Caco-2 (cell line): ENCODE measurements at regions of chr13 and their contacts with region 1.

Region 1: DNA sequence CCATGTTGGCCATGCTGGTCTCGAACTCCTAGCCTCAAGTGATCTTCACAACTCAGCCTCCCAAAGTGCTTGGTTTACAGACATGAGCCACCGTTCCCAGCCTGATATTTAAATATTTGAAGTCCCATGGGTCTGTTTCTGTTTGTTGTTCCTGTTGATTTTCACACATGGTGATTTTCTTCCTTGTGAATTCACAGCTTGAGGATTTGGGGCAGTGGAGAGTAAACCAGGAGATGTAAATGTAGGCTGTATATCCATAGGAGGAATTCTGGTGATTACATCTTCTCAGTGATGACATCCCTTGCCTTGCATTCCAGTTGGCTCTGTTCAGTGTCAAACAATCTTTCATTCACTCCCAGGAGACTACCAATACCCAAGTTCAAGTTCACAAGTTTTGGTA is 471.9 kb downstream of the KCTD12 start:
- DNase-seq: no peak
- H3K4me3 ChIP-seq: no peak overlapping the region
- H3K4me3 Mint-ChIP-seq: no peak overlapping the region
- H3K27ac Mint-ChIP-seq: no peak overlapping the region
- H3K4me1 ChIP-seq: no peaks in the 10 kb centered on the region
- H3K4me1 Mint-ChIP-seq: peaks cover 13% of the 10 kb centered on the region
- H3K27me3 ChIP-seq: no peaks in the 10 kb centered on the region
- H3K27me3 Mint-ChIP-seq: no peaks in the 10 kb centered on the region
- CTCF ChIP-seq: no peak

Region 2: GRCh38 chr13:75986818-75987217 is 427.5 kb before region 1 on chr13:
- CTCF ChIA-PET with region 1: no interaction called
- POLR2A ChIA-PET with region 1: no interaction called
- intact Hi-C with region 1: no loop called
- DNase-seq: no peak
- H3K4me3 ChIP-seq: no peak overlapping the region
- H3K4me3 Mint-ChIP-seq: no peak overlapping the region
- H3K27ac Mint-ChIP-seq: no peak overlapping the region
- H3K4me1 ChIP-seq: no peaks in the 10 kb centered on the region
- H3K4me1 Mint-ChIP-seq: peaks cover 24% of the 10 kb centered on the region
- H3K27me3 ChIP-seq: no peaks in the 10 kb centered on the region
- H3K27me3 Mint-ChIP-seq: no peaks in the 10 kb centered on the region
- CTCF ChIP-seq: no peak

Region 3: GRCh38 chr13:76048675-76049375 is 365.5 kb before region 1 on chr13:
- CTCF ChIA-PET with region 1: no interaction called
- POLR2A ChIA-PET with region 1: no interaction called
- intact Hi-C with region 1: no loop called
- DNase-seq: peak in 1 of 2 experiments; percentile 29
- H3K4me3 ChIP-seq: no peak overlapping the region
- H3K4me3 Mint-ChIP-seq: peak overlapping the region; percentile 28
- H3K27ac Mint-ChIP-seq: peak overlapping the region; percentile 58
- H3K4me1 ChIP-seq: peaks cover 31% of the 10 kb centered on the region
- H3K4me1 Mint-ChIP-seq: peaks cover 19% of the 10 kb centered on the region
- H3K27me3 ChIP-seq: no peaks in the 10 kb centered on the region
- H3K27me3 Mint-ChIP-seq: no peaks in the 10 kb centered on the region
- CTCF ChIP-seq: no peak

Region 4: GRCh38 chr13:76378767-76379166 is 35.6 kb before region 1 on chr13:
- CTCF ChIA-PET with region 1: no interaction called
- POLR2A ChIA-PET with region 1: no interaction called
- intact Hi-C with region 1: loop called (anchors 1 kb)
- DNase-seq: no peak
- H3K4me3 ChIP-seq: no peak overlapping the region
- H3K4me3 Mint-ChIP-seq: no peak overlapping the region
- H3K27ac Mint-ChIP-seq: no peak overlapping the region
- H3K4me1 ChIP-seq: no peaks in the 10 kb centered on the region
- H3K4me1 Mint-ChIP-seq: no peaks in the 10 kb centered on the region
- H3K27me3 ChIP-seq: no peaks in the 10 kb centered on the region
- H3K27me3 Mint-ChIP-seq: no peaks in the 10 kb centered on the region
- CTCF ChIP-seq: no peak

Region 5: DNA sequence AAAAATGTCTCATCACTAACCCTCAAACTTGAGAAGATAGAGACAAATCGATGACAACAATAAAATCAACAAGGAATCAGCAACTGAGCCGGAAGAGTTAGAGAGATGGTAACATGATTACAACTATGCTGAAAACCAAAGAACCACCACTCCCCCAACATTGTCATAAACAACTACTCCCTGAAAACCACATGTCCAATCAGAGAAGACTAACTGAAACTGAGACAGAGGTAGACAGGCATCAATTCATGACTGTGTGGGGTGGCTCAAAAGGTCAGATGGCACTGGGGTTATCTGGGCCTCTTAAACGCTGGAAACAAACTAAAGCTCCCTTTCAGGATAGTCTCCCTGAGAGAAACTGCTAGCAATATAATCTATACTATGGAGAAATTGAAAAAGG is 16.9 kb before region 1 on chr13:
- CTCF ChIA-PET with region 1: no interaction called
- POLR2A ChIA-PET with region 1: no interaction called
- intact Hi-C with region 1: no loop called
- DNase-seq: no peak
- H3K4me3 ChIP-seq: no peak overlapping the region
- H3K4me3 Mint-ChIP-seq: no peak overlapping the region
- H3K27ac Mint-ChIP-seq: no peak overlapping the region
- H3K4me1 ChIP-seq: no peaks in the 10 kb centered on the region
- H3K4me1 Mint-ChIP-seq: no peaks in the 10 kb centered on the region
- H3K27me3 ChIP-seq: no peaks in the 10 kb centered on the region
- H3K27me3 Mint-ChIP-seq: no peaks in the 10 kb centered on the region
- CTCF ChIP-seq: no peak